Psoas muscle (tissue), 8 donors: ENCODE measurements at regions of chr3 and their contacts with region 1.

Region 1: DNA sequence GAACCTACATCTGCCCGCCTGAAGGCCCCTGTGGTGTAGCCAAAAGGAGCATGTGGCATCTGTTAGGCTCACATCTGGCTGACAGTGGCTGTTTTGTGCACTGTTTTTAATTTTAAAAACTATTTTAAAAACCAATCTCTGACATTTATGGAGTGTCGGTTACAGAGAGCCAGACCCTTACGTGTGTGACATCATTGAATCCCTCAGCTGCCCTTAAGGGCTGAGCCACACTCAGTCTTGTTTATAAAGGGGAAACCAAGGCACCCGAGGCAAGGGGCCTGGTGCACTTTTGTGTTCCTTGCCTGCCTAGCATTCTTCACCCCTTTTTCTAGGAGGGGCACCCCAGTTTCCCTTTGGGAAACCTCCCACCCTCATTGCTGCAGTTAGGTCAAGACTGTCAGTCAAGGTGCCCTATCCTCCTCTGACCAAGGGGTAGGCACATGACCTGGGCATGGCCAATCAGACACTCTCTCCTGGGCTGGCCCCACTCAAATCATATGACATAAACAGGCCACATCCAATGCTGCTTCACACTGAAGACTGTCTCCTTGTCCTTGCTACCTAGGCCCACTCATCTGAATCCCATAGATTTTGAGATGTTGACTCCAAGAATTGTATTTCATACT is 105.3 kb downstream of the LSM3 start:
- DNase-seq: no peak
- ATAC-seq: peak in 1 of 4 donors; percentile 18
- H3K4me3 ChIP-seq: no peak overlapping the region
- H3K27ac ChIP-seq: no peak overlapping the region
- H3K4me1 ChIP-seq: peaks cover 34% of the 10 kb centered on the region
- H3K27me3 ChIP-seq: no peaks in the 10 kb centered on the region
- CTCF ChIP-seq: no peak

Region 2: GRCh38 chr3:14379843-14380242 is 95.9 kb after region 1 on chr3:
- intact Hi-C with region 1: loop called in 1 of 2 experiments (anchors 5 kb)
- DNase-seq: no peak
- ATAC-seq: peak; percentile 20 to 79 (median 59)
- H3K4me3 ChIP-seq: no peak overlapping the region
- H3K27ac ChIP-seq: peak overlapping the region; percentile 59
- H3K4me1 ChIP-seq: peaks cover 35% of the 10 kb centered on the region
- H3K27me3 ChIP-seq: no peaks in the 10 kb centered on the region
- CTCF ChIP-seq: no peak